Left cardiac atrium (tissue), 4 donors: ENCODE measurements at regions of chr5 and their contacts with region 1.

Region 1: GRCh38 chr5:150272526-150272925 is 17.0 kb downstream of the CAMK2A start:
- DNase-seq: no peak
- ATAC-seq: peak in 1 of 2 donors; percentile 35

Region 2: GRCh38 chr5:150342583-150342982 is 70.1 kb after region 1 on chr5:
- intact Hi-C with region 1: loop called in 1 of 2 experiments (anchors 2 kb)
- DNase-seq: no peak
- ATAC-seq: no peak